Ascending aorta (tissue), 2 donors: ENCODE measurements at regions of chr1 and their contacts with region 1.

Region 1: DNA sequence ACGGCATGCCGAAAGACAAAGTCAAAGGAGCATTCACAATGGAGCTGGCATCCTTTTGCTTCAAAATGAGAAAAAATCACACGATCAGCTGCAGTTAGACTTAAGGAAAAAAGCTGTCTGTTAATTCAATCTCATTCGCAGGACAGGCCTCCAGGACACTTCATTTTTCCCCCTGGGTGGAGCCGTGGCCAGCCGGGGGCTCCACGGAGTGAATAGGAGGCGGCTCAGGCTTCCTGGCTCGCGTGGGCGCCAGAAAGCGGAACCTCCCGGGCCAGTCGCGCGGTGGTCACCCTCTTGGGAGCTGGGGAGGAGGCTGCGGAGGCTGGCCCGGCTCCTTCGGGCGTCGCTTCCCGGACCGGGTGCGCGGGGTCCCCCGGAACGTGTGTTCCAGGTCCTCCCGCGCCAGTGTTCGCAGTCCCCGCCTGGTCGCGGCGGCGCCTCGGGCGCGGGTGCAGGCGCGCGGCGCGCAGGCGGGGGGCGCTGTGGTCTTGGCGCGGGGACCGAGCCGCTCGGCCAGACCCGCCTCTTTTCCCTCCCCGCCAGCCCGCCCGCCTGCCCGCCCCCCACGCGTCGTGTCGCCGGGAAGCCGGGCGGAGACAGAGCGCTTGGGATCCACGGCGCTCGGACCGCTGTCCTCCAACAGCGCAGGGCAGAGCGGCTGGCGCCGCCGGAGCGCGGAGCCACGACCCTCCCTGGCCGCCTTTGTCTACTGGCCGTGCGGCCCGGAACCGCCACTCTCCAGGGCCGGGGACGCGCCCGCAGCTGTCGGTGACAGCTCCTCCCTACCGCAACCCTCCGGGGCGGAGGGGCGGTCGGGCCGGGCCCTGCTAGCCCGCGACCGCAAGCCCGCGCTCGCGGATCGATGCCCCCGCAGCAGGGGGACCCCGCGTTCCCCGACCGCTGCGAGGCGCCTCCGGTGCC is at the start of gene RHOU:
- DNase-seq: peak; percentile 19 to 85
- H3K4me3 ChIP-seq: peak within 1 kb of the TSS; percentile 97 to 98
- H3K27ac ChIP-seq: peak within 1 kb of the TSS; percentile 96 to 97
- H3K4me1 ChIP-seq: peaks cover 3 to 21% of the 10 kb centered on the region in 2 donors
- H3K27me3 ChIP-seq: no peaks in the 10 kb centered on the region
- CTCF ChIP-seq: peak; percentile 36 to 98 (median 49)
- total RNA-seq, gene RHOU: 27.7 TPM

Region 2: DNA sequence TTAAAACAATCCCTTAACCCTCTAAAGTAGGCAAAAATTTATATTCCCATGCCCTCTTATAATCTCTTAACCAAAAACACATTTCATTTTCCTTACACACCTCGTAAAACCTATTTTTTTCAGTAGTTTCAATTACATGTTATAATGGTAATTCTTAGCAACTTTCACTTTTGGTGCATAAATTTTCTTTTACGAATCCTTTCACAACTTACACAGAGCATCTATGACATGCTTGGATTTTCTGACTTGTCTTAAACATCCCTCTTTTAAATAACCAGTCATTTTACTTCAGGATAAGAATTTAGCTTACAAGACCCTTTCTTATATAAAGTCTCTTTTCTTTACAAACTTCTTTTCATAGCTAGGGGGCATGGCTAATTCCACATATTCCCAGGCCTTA is 617.1 kb before region 1 on chr1:
- intact Hi-C with region 1: no loop called
- DNase-seq: no peak
- H3K4me3 ChIP-seq: no peak overlapping the region
- H3K27ac ChIP-seq: no peak overlapping the region
- H3K4me1 ChIP-seq: no peaks in the 10 kb centered on the region
- H3K27me3 ChIP-seq: no peaks in the 10 kb centered on the region
- CTCF ChIP-seq: no peak

Region 3: DNA sequence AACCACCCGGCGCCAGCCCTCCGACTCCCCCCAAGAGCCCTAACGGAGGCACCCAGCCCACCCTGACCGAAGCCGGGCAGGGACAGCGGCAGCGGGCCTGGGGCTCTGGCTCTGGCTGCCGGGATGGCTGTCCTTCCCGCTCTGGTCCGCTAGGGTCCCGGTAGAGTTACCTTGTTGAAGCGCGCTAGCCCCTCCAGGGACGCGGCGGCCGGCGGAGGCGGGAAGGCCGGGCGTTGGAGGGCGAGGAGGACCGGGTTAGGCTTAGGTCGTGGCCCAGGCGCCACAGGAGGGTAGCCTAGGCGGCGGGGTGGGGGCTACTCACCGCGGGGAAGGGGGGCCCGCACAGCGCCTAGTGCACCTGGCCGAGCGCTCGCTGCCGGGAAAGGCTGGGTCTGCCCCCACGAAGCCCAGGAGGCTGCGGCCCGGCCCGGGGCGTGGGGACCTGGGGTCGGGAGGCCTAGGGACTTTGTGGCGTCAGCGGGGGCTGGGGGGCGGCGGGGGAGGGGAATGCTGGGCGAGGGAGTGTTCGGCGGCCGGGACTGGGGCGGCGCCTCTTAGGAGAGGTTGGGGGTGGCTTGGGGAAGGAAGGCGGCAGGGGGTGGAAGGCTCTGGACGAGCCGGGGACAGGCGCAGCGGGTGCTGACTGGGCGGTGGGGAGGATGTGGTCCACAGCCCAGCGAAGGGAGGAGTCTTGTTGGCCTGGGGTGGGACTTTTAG is 318.8 kb before region 1 on chr1 and contains the start of gene TRIM17:
- intact Hi-C with region 1: no loop called
- DNase-seq: no peak
- H3K4me3 ChIP-seq: peak within 1 kb of the TSS; percentile 44 to 59
- H3K27ac ChIP-seq: no peak within 1 kb of the TSS
- H3K4me1 ChIP-seq: peaks cover 6 to 10% of the 10 kb centered on the region in 2 donors
- H3K27me3 ChIP-seq: peaks cover 19% of the 10 kb centered on the region
- CTCF ChIP-seq: peak in 1 of 3 experiments; percentile 12
- total RNA-seq, gene TRIM17: not detected

Region 4: GRCh38 chr1:228751360-228752113 is 16.4 kb after region 1 on chr1:
- intact Hi-C with region 1: no loop called
- DNase-seq: no peak
- H3K4me3 ChIP-seq: no peak overlapping the region
- H3K27ac ChIP-seq: no peak overlapping the region
- H3K4me1 ChIP-seq: peaks cover 3 to 6% of the 10 kb centered on the region in 2 donors
- H3K27me3 ChIP-seq: no peaks in the 10 kb centered on the region
- CTCF ChIP-seq: no peak

Region 5: GRCh38 chr1:228860911-228861831 is 126.0 kb after region 1 on chr1:
- intact Hi-C with region 1: loop called (anchors 5 kb)
- DNase-seq: peak in 1 of 2 donors; percentile 69
- H3K4me3 ChIP-seq: no peak overlapping the region
- H3K27ac ChIP-seq: peak overlapping the region in 1 of 2 donors; percentile 19
- H3K4me1 ChIP-seq: peaks cover 5 to 18% of the 10 kb centered on the region in 2 donors
- H3K27me3 ChIP-seq: no peaks in the 10 kb centered on the region
- CTCF ChIP-seq: no peak

Region 6: DNA sequence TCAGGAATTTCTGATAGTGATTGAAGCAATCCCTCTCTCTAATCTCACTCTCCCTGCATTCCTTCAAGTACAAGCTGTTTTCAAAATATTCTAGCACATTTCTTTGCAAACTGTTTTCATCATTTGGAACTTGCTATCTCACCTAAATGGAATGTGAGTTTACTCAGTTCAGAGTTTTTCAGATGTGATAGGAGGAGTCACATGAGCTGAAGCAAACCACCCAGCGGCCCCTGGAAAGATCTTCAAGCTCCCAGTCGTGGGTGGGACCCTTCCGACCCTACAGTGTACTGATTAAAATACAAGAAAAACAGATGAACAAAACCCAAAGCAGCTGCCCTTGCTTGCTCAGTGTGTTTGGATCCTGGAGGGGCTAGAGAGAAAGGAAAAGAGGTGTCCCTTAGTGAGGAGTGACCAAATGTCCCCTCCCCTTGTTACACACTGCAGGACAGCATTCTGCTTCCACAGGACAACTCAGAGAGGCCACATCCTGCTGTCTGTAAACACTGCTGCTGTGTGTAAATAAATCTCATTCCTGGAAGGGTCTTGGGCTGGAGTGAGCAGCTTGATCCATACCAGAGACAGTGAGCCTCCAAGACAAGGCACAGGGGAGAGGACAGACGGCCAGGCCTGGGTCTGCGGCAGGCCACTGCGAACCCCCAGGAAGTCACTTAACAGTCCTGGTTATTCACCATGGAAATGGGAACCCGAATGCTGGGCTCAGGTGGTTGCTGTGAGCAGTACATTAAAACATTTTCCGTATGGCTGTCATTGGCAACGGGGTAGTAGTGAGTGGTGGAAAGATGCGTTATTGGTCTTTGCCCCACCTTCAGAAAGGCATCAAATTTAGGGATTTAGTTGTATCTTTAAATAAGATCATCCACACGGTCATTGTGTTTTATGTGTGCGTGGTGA is 229.3 kb after region 1 on chr1:
- intact Hi-C with region 1: loop called (anchors 5 kb)
- DNase-seq: peak in 1 of 2 donors; percentile 78
- H3K4me3 ChIP-seq: no peak overlapping the region
- H3K27ac ChIP-seq: peak overlapping the region; percentile 80 to 91
- H3K4me1 ChIP-seq: peaks cover 3 to 9% of the 10 kb centered on the region in 2 donors
- H3K27me3 ChIP-seq: no peaks in the 10 kb centered on the region
- CTCF ChIP-seq: no peak

Region 7: DNA sequence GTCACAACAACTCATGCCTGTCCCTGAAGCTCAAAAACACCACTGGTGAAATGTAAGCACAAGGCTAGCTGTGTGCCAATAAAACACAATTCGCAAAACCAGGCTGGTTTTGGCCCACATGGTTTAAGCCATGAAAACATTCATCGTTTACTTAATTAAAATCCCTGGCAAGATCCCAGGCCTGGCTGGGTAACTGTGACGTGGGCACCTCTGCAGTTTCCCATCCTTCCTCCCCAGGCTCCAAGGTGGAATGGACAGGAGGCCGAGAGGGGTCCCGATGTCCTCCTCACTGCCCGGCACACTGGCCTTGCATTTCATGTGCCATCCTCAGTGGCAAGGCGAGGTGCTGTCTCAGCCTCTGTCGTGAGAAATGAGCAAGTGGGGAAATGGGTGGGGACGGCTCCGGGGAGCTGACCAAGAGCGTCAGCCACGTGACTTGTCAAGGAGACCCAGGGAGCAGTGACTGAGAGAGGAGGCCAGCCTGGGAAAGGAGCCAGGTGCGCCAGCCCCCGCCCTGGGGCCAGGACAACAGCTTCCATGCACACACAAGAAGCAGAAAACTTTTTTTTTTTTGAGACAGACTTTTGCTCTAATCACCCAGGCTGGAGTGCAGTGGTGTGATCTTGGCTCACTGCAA is 382.6 kb after region 1 on chr1:
- intact Hi-C with region 1: loop called (anchors 2 kb)
- DNase-seq: peak; percentile 46 to 94
- H3K4me3 ChIP-seq: no peak overlapping the region
- H3K27ac ChIP-seq: peak overlapping the region; percentile 56 to 72
- H3K4me1 ChIP-seq: peaks cover 4 to 35% of the 10 kb centered on the region in 2 donors
- H3K27me3 ChIP-seq: no peaks in the 10 kb centered on the region
- CTCF ChIP-seq: no peak

Region 8: DNA sequence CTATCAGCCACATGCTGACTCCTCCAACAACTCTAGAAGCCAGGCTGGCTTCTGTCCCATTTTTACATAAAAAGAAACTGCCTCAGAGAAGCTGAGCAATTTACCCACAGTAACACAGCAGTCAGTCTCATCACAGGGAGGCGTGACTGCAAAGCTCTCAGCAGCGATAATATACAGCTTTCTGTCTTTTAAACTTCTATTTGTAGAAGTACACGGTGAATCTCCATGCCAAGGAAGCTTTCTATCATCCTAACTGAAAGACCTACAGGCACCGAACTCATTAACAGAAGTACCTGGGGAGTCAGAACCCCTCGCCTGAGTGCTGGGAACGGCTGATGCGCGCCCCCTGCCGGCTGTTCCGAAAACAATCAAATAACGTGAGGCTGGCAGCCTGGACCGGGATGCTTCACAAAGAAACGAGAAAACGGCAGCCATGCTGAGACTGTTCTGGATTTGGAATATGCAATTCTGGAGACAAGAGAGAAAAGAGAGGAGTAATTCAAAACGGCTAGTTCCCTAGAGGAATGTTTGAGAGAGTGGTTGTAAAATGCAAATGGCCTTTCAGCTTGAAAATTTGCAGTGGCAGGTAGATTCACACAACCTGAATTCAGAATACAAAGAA is 492.3 kb after region 1 on chr1:
- intact Hi-C with region 1: loop called (anchors 2 kb)
- DNase-seq: peak; percentile 30 to 90
- H3K4me3 ChIP-seq: no peak overlapping the region
- H3K27ac ChIP-seq: no peak overlapping the region
- H3K4me1 ChIP-seq: peaks cover 9 to 25% of the 10 kb centered on the region in 2 donors
- H3K27me3 ChIP-seq: no peaks in the 10 kb centered on the region
- CTCF ChIP-seq: peak; percentile 74 to 86 (median 85)